Activated CD4-positive, alpha-beta T cell treated with anti-CD3 and anti-CD28 coated beads for 36 hours (primary cell): ENCODE measurements at regions of chrX and their contacts with region 1.

Region 1: GRCh38 chrX:129754056-129755024 is 15.6 kb downstream of the XPNPEP2 start:
- DNase-seq: peak; percentile 36
- ATAC-seq: no peak
- H3K4me3 Mint-ChIP-seq: no peak overlapping the region
- H3K27ac Mint-ChIP-seq: peak overlapping the region; percentile 65
- H3K4me1 Mint-ChIP-seq: peaks cover 45% of the 10 kb centered on the region
- H3K27me3 Mint-ChIP-seq: no peaks in the 10 kb centered on the region

Region 2: DNA sequence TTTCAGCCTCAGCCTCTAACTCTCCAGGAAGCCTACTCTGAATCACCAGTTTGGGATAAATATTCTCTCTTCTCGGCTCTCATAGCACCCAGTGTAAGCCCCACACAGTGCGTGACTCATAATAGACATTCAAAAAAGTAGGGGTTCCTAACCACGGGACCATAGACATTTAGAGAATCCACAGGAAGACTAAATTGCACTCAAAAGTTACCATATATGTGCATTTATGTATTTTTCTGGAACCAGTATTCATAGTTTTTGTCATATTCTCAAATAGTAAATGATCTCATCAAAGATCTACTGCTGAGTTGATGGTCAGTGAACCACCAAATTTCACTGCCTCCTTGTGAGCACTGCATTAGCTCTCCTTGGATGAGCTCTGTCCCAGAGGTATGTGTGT is 856.7 kb before region 1 on chrX:
- CTCF ChIA-PET with region 1: no interaction called
- POLR2A ChIA-PET with region 1: no interaction called
- intact Hi-C with region 1: no loop called
- DNase-seq: no peak
- ATAC-seq: no peak
- H3K4me3 Mint-ChIP-seq: no peak overlapping the region
- H3K27ac Mint-ChIP-seq: no peak overlapping the region
- H3K4me1 Mint-ChIP-seq: no peaks in the 10 kb centered on the region
- H3K27me3 Mint-ChIP-seq: no peaks in the 10 kb centered on the region

Region 3: GRCh38 chrX:129637217-129638109 is 116.9 kb before region 1 on chrX:
- CTCF ChIA-PET with region 1: interaction called, 3 read pairs
- POLR2A ChIA-PET with region 1: no interaction called
- intact Hi-C with region 1: loop called in 1 of 2 experiments (anchors 1 kb)
- DNase-seq: peak; percentile 85
- ATAC-seq: peak; percentile 76
- H3K4me3 Mint-ChIP-seq: no peak overlapping the region
- H3K27ac Mint-ChIP-seq: no peak overlapping the region
- H3K4me1 Mint-ChIP-seq: no peaks in the 10 kb centered on the region
- H3K27me3 Mint-ChIP-seq: no peaks in the 10 kb centered on the region